IMR-90 (cell line): ENCODE measurements at regions of chr1 and their contacts with region 1.

Region 1: DNA sequence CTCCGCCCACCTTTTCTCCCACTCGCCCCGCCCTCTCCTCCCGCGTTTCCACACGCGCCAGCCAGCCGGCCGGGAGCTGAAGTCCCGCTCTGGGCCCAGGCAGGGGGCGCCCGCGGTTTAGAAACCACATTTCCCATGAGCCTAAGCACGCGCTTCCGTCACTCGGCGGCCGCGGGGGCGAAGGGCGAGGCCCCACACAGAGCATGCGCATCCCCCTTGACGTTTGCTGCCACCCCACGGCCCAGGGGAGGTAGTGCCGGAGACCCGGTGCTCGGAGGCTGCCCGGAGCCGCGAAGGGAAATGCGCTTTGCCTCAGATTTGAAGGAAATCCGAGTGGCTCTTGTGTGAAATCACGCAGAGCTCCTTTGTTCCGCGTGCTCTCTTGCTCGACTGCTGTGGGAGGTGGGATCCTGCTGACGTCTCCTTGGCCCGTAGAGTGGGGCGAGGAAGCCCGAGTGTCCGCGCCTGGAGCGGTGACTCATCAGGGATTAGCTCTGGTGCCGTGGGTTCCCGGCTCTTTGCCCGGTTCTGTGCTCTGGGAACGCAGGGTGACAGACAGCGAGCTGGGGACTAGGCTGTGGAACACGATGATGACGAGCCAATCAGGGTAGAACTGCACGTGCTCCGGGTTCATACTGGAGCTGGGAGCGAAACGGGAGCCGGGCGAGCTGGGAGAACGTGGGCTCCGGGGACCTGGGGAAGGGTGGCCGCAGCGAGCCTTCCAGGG is 407 bp upstream of the B3GALNT2 start:
- DNase-seq: peak; percentile 98
- ATAC-seq: peak; percentile 88
- H3K4me3 ChIP-seq: peak overlapping the region; percentile 75
- H3K27ac ChIP-seq: peak overlapping the region; percentile 77
- H3K4me1 ChIP-seq: peaks cover 2% of the 10 kb centered on the region; the same call in 1 of the 2 replicates
- H3K27me3 ChIP-seq: no peaks in the 10 kb centered on the region
- CTCF ChIP-seq: peak; percentile 94
- POLR2A ChIP-seq: peak; percentile 83
- RAD21 ChIP-seq: peak; percentile 58

Region 2: GRCh38 chr1:235253219-235253962 is 251.3 kb before region 1 on chr1:
- CTCF ChIA-PET with region 1: interaction called, 3 read pairs
- POLR2A ChIA-PET with region 1: no interaction called
- dilution Hi-C with region 1: no loop called
- in situ Hi-C with region 1: no loop called
- intact Hi-C with region 1: loop called (anchors 5 kb)
- DNase-seq: peak; percentile 72
- ATAC-seq: peak; percentile 100
- H3K4me3 ChIP-seq: no peak overlapping the region
- H3K27ac ChIP-seq: no peak overlapping the region
- H3K4me1 ChIP-seq: no peaks in the 10 kb centered on the region; the same call in 1 of the 2 replicates
- H3K27me3 ChIP-seq: no peaks in the 10 kb centered on the region
- CTCF ChIP-seq: peak; percentile 84
- POLR2A ChIP-seq: no peak
- RAD21 ChIP-seq: peak; percentile 90

Region 3: GRCh38 chr1:235741294-235741693 is 236.6 kb after region 1 on chr1:
- CTCF ChIA-PET with region 1: interaction called, 12 read pairs
- POLR2A ChIA-PET with region 1: no interaction called
- dilution Hi-C with region 1: no loop called
- in situ Hi-C with region 1: no loop called
- intact Hi-C with region 1: no loop called
- DNase-seq: peak; percentile 87
- ATAC-seq: peak; percentile 86
- H3K4me3 ChIP-seq: no peak overlapping the region
- H3K27ac ChIP-seq: peak overlapping the region; percentile 32; the same call in 1 of the 2 replicates
- H3K4me1 ChIP-seq: peaks cover 6% of the 10 kb centered on the region
- H3K27me3 ChIP-seq: no peaks in the 10 kb centered on the region
- CTCF ChIP-seq: no peak
- POLR2A ChIP-seq: peak; percentile 19; the same call in 1 of the 2 replicates
- RAD21 ChIP-seq: no peak

Region 4: GRCh38 chr1:235783148-235783776 is 278.6 kb after region 1 on chr1:
- CTCF ChIA-PET with region 1: no interaction called
- POLR2A ChIA-PET with region 1: no interaction called
- dilution Hi-C with region 1: no loop called
- in situ Hi-C with region 1: no loop called
- intact Hi-C with region 1: loop called (anchors 2 kb)
- DNase-seq: peak; percentile 73
- ATAC-seq: peak; percentile 78
- H3K4me3 ChIP-seq: no peak overlapping the region
- H3K27ac ChIP-seq: no peak overlapping the region
- H3K4me1 ChIP-seq: peaks cover 6% of the 10 kb centered on the region
- H3K27me3 ChIP-seq: no peaks in the 10 kb centered on the region
- CTCF ChIP-seq: peak; percentile 70
- POLR2A ChIP-seq: 0 out of 2 replicates have a peak, but pooled peaks have one; percentile 31
- RAD21 ChIP-seq: peak; percentile 80

Region 5: DNA sequence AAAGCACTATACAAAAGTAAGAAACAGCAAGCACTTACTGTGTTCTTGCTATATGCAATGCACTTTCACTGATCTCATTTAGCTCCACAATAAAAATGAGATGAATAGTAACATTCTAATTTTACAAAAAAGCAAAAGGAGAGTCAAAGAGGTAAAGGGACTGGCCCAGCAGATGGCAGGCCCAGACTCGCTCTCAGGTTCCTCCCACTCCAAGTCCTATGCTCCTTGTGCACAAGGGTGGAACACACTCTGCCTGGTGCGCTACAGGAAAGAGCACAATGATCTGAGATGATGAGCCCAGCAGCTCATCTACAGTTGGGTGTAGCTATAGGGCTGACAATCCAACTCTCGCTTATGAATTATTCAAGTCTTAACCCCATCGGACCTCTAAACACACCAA is 456.1 kb after region 1 on chr1:
- CTCF ChIA-PET with region 1: no interaction called
- POLR2A ChIA-PET with region 1: no interaction called
- dilution Hi-C with region 1: no loop called
- in situ Hi-C with region 1: no loop called
- intact Hi-C with region 1: no loop called
- DNase-seq: no peak
- ATAC-seq: no peak
- H3K4me3 ChIP-seq: no peak overlapping the region
- H3K27ac ChIP-seq: no peak overlapping the region
- H3K4me1 ChIP-seq: peaks cover 3% of the 10 kb centered on the region; the same call in 1 of the 2 replicates
- H3K27me3 ChIP-seq: peaks cover 1% of the 10 kb centered on the region; the same call in 1 of the 2 replicates
- CTCF ChIP-seq: no peak
- POLR2A ChIP-seq: no peak
- RAD21 ChIP-seq: no peak

Region 6: DNA sequence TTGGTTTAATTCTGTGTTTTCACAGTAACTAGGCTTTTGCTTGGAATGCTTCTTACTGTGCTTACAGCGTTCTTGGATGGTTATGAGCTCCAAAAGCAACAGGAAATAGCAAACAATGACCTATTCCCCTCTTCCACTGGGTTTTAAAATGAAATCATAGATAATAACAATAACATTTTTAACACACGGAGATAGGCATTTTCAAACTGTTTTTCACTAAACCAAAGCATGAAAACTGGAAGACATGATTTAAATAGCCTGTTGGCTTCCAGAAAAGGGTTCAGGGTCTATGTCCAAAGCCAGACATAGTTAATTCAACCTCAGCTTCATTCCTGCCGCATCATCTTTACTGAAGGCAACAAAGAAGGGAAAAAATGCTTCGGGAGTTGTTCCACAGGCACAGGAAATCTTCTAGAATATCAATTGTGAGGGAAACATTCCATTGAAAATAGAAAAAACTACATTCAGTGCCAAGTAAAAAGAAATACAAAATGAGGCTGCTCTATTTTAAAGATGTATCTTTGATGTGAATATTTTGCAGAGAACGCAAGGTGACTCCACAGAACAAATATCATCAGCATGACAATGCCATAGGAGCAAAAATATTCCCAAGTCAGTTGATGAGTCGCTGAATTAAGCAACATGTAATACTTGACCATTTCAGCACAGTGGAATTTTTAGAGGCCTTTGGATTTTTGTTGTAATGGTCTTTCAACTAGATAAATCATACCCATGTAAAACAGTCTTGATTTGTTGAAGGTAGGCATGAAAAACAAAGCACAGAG is 479.6 kb after region 1 on chr1:
- CTCF ChIA-PET with region 1: interaction called, 13 read pairs
- POLR2A ChIA-PET with region 1: no interaction called
- dilution Hi-C with region 1: no loop called
- in situ Hi-C with region 1: no loop called
- intact Hi-C with region 1: no loop called
- DNase-seq: peak; percentile 90
- ATAC-seq: peak; percentile 89
- H3K4me3 ChIP-seq: no peak overlapping the region
- H3K27ac ChIP-seq: peak overlapping the region; percentile 73
- H3K4me1 ChIP-seq: peaks cover 14% of the 10 kb centered on the region
- H3K27me3 ChIP-seq: no peaks in the 10 kb centered on the region
- CTCF ChIP-seq: no peak
- POLR2A ChIP-seq: no peak
- RAD21 ChIP-seq: no peak